ENCODE measurements at regions of chr1 and their contacts with region 1.

Region 1: GRCh38 chr1:67760030-67760821 is 73.0 kb downstream of the GNG12 start:
- H3K4me3 Mint-ChIP-seq: no peak overlapping the region
- H3K27ac Mint-ChIP-seq: no peak overlapping the region
- H3K4me1 Mint-ChIP-seq: peaks cover under 1% of the 10 kb centered on the region
- H3K27me3 Mint-ChIP-seq: peaks cover 13% of the 10 kb centered on the region

Region 2: DNA sequence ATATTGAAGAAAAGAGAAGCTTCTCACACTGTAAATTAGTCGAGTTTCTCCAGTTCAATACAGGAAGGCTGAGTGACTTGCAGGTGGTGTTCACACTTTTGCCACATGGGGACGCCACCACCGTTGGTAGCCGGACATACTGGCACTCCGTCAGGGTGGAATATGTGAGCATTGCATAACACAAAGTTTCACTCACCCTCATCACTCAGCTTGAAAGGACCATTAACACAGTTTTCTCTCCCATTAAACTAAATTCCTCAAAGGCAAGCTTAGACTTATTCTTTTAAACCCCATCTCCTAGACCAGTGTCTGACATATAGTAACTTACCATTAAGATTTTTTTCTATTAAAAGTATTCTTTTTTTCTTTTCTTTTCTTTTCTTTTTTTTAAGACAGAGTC is 224.8 kb before region 1 on chr1:
- intact Hi-C with region 1: loop called (anchors 1 kb)
- H3K4me3 Mint-ChIP-seq: no peak overlapping the region
- H3K27ac Mint-ChIP-seq: no peak overlapping the region
- H3K4me1 Mint-ChIP-seq: no peaks in the 10 kb centered on the region
- H3K27me3 Mint-ChIP-seq: no peaks in the 10 kb centered on the region

Region 3: GRCh38 chr1:67710417-67710816 is 49.8 kb before region 1 on chr1:
- intact Hi-C with region 1: no loop called
- H3K4me3 Mint-ChIP-seq: no peak overlapping the region
- H3K27ac Mint-ChIP-seq: no peak overlapping the region
- H3K4me1 Mint-ChIP-seq: peaks cover 5% of the 10 kb centered on the region
- H3K27me3 Mint-ChIP-seq: no peaks in the 10 kb centered on the region

Region 4: GRCh38 chr1:68120136-68120791 is 360.0 kb after region 1 on chr1:
- intact Hi-C with region 1: loop called (anchors 10 kb)
- H3K4me3 Mint-ChIP-seq: no peak overlapping the region
- H3K27ac Mint-ChIP-seq: no peak overlapping the region
- H3K4me1 Mint-ChIP-seq: peaks cover 7% of the 10 kb centered on the region
- H3K27me3 Mint-ChIP-seq: no peaks in the 10 kb centered on the region